Mammary epithelial cell (primary cell): ENCODE measurements at regions of chr19 and their contacts with region 1.

Region 1: GRCh38 chr19:12983542-12984142 is 11.6 kb upstream of the NFIX start:
- DNase-seq: peak; percentile 73
- H3K4me3 ChIP-seq: peak overlapping the region in 1 of 3 experiments; percentile 34
- H3K27ac ChIP-seq: peak overlapping the region; percentile 50
- H3K4me1 ChIP-seq: peaks cover 5% of the 10 kb centered on the region
- H3K27me3 ChIP-seq: no peaks in the 10 kb centered on the region
- CTCF ChIP-seq: peak; percentile 73 to 91

Region 2: GRCh38 chr19:12880551-12881171 is 103.0 kb before region 1 on chr19:
- CTCF ChIA-PET with region 1: no interaction called
- dilution Hi-C with region 1: no loop called
- in situ Hi-C with region 1: no loop called
- intact Hi-C with region 1: no loop called
- DNase-seq: no peak
- H3K4me3 ChIP-seq: peak overlapping the region; percentile 67 to 95 (median 84)
- H3K27ac ChIP-seq: peak overlapping the region; percentile 55
- H3K4me1 ChIP-seq: peaks cover 14% of the 10 kb centered on the region
- H3K27me3 ChIP-seq: no peaks in the 10 kb centered on the region
- CTCF ChIP-seq: no peak

Region 3: GRCh38 chr19:12890787-12891552 is 92.7 kb before region 1 on chr19 and contains the start of gene GCDH:
- CTCF ChIA-PET with region 1: no interaction called
- dilution Hi-C with region 1: no loop called
- in situ Hi-C with region 1: no loop called
- intact Hi-C with region 1: no loop called
- DNase-seq: peak; percentile 99
- H3K4me3 ChIP-seq: peak within 1 kb of the TSS; percentile 64 to 87 (median 84)
- H3K27ac ChIP-seq: peak within 1 kb of the TSS; percentile 37
- H3K4me1 ChIP-seq: peaks cover 8% of the 10 kb centered on the region
- H3K27me3 ChIP-seq: no peaks in the 10 kb centered on the region
- CTCF ChIP-seq: no peak
- total RNA-seq, gene GCDH: 25.2 to 31.5 TPM

Region 4: GRCh38 chr19:13022859-13023636 is 39.4 kb after region 1 on chr19:
- CTCF ChIA-PET with region 1: no interaction called
- dilution Hi-C with region 1: no loop called
- in situ Hi-C with region 1: no loop called
- intact Hi-C with region 1: no loop called
- DNase-seq: peak; percentile 95
- H3K4me3 ChIP-seq: peak overlapping the region; percentile 57 to 65 (median 64)
- H3K27ac ChIP-seq: peak overlapping the region; percentile 90
- H3K4me1 ChIP-seq: peaks cover 74% of the 10 kb centered on the region
- H3K27me3 ChIP-seq: no peaks in the 10 kb centered on the region
- CTCF ChIP-seq: no peak

Region 5: GRCh38 chr19:13228561-13228960 is 244.9 kb after region 1 on chr19:
- CTCF ChIA-PET with region 1: no interaction called
- dilution Hi-C with region 1: no loop called
- in situ Hi-C with region 1: no loop called
- intact Hi-C with region 1: no loop called
- DNase-seq: no peak
- H3K4me3 ChIP-seq: no peak overlapping the region
- H3K27ac ChIP-seq: no peak overlapping the region
- H3K4me1 ChIP-seq: no peaks in the 10 kb centered on the region
- H3K27me3 ChIP-seq: no peaks in the 10 kb centered on the region
- CTCF ChIP-seq: no peak

Region 6: GRCh38 chr19:13588957-13589833 is 605.6 kb after region 1 on chr19:
- CTCF ChIA-PET with region 1: no interaction called
- dilution Hi-C with region 1: no loop called
- in situ Hi-C with region 1: loop called in 1 of 2 experiments (anchors 25 kb)
- intact Hi-C with region 1: loop called (anchors 2 kb)
- DNase-seq: peak; percentile 40
- H3K4me3 ChIP-seq: no peak overlapping the region
- H3K27ac ChIP-seq: no peak overlapping the region
- H3K4me1 ChIP-seq: no peaks in the 10 kb centered on the region
- H3K27me3 ChIP-seq: no peaks in the 10 kb centered on the region
- CTCF ChIP-seq: peak; percentile 74 to 97